ENCODE measurements at regions of chr4 and their contacts with region 1.

Region 1: DNA sequence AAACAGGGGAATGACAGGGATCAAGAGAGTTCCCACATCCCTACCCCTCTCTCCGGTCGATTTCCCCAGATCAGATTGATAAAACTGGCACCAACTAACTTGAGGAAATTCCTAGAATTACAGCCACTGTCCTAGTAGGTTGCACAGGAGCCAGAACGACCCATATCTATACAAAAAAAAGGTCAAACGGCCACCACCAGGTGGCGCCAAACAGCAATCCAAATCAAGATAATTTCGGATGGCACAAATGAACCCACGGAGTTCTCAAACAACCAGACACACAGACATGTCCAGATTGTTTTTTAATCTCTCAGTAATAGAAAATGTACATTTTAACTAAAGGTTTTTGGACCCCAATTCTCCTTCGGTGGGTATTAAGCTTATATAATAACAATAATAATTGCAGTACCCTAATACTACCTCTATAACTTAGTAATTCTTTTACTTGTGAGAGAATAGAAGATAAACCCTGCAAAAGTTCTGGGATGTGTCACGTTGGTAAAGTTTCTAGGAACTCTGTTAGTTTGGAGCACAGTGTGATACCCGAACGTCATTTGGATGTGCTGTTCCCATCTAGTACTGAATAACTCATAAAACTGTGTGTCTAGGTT is 212.6 kb downstream of the SPOCK3 start:
- DNase-seq: peak; percentile 76
- ATAC-seq: no peak
- H3K4me3 Mint-ChIP-seq: no peak overlapping the region
- H3K27ac Mint-ChIP-seq: no peak overlapping the region
- H3K4me1 Mint-ChIP-seq: no peaks in the 10 kb centered on the region
- H3K27me3 Mint-ChIP-seq: no peaks in the 10 kb centered on the region
- CTCF ChIP-seq: peak; percentile 78

Region 2: DNA sequence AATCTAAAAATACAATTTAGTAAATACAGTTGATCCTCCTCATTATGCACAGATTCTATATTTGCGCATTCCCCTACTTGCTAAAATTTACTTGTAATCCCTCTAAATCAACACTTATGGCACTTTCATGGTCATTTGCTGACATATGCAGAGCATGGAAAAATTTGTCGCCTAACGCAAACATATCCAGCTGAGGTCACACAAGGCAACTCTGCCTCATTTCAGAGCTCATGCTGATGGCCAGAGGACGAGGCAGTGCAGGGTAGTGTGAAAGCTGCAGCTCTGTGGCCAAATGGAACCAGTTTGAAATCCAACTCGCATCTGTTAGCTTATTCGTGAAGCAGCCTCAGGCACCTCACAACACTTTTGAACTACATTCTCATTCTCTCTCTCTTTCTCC is 1854.0 kb before region 1 on chr4:
- CTCF ChIA-PET with region 1: no interaction called
- POLR2A ChIA-PET with region 1: no interaction called
- intact Hi-C with region 1: no loop called
- DNase-seq: no peak
- ATAC-seq: no peak
- H3K4me3 Mint-ChIP-seq: no peak overlapping the region
- H3K27ac Mint-ChIP-seq: no peak overlapping the region
- H3K4me1 Mint-ChIP-seq: no peaks in the 10 kb centered on the region
- H3K27me3 Mint-ChIP-seq: no peaks in the 10 kb centered on the region
- CTCF ChIP-seq: no peak

Region 3: GRCh38 chr4:166924424-166924823 is 97.2 kb before region 1 on chr4:
- CTCF ChIA-PET with region 1: no interaction called
- POLR2A ChIA-PET with region 1: no interaction called
- intact Hi-C with region 1: no loop called
- DNase-seq: no peak
- ATAC-seq: no peak
- H3K4me3 Mint-ChIP-seq: no peak overlapping the region
- H3K27ac Mint-ChIP-seq: no peak overlapping the region
- H3K4me1 Mint-ChIP-seq: no peaks in the 10 kb centered on the region
- H3K27me3 Mint-ChIP-seq: no peaks in the 10 kb centered on the region
- CTCF ChIP-seq: no peak

Region 4: GRCh38 chr4:167290678-167291077 is 269.0 kb after region 1 on chr4:
- CTCF ChIA-PET with region 1: no interaction called
- POLR2A ChIA-PET with region 1: no interaction called
- intact Hi-C with region 1: loop called (anchors 5 kb)
- DNase-seq: no peak
- ATAC-seq: no peak
- H3K4me3 Mint-ChIP-seq: no peak overlapping the region
- H3K27ac Mint-ChIP-seq: no peak overlapping the region
- H3K4me1 Mint-ChIP-seq: no peaks in the 10 kb centered on the region
- H3K27me3 Mint-ChIP-seq: no peaks in the 10 kb centered on the region
- CTCF ChIP-seq: no peak

Region 5: GRCh38 chr4:167622481-167623246 is 601.0 kb after region 1 on chr4:
- CTCF ChIA-PET with region 1: no interaction called
- POLR2A ChIA-PET with region 1: no interaction called
- intact Hi-C with region 1: loop called (anchors 5 kb)
- DNase-seq: peak; percentile 52
- ATAC-seq: peak; percentile 49
- H3K4me3 Mint-ChIP-seq: no peak overlapping the region
- H3K27ac Mint-ChIP-seq: no peak overlapping the region
- H3K4me1 Mint-ChIP-seq: no peaks in the 10 kb centered on the region
- H3K27me3 Mint-ChIP-seq: no peaks in the 10 kb centered on the region
- CTCF ChIP-seq: peak; percentile 54

Region 6: DNA sequence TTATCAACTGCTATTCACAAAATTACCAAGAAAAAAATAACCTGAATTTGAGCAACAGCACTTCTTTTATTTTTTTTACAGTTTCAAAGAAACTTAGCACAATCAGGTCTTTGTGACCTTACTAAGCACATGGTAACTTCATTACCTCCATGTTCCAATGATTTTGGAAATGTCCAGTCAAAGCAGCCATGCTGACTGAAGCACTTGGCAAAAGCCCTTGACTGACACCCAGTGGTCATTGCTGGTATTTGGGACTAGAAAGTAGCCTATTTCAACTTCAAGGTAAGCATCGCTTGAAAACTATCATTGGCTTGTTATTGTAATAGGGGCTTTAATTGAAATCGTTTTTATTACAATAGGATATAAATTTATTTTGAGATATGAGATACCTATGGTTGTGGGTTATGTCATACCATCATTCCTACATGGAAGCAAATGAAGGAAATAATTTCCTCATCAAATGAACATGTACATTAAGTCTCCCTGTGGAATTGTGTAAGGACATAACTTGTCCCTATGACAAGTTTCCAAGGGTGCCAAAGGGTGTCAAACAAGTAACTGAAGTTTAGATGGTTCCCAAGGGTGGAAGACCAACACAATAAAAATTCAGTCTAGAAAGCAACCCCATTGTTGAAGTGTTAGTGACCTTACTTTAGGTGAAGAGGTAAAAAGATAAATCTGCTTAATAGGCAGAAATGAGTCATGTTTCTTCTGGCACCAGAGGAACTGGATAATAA is 1055.5 kb after region 1 on chr4:
- CTCF ChIA-PET with region 1: no interaction called
- POLR2A ChIA-PET with region 1: no interaction called
- intact Hi-C with region 1: loop called (anchors 5 kb)
- DNase-seq: peak; percentile 66
- ATAC-seq: peak; percentile 55
- H3K4me3 Mint-ChIP-seq: no peak overlapping the region
- H3K27ac Mint-ChIP-seq: no peak overlapping the region
- H3K4me1 Mint-ChIP-seq: no peaks in the 10 kb centered on the region
- H3K27me3 Mint-ChIP-seq: no peaks in the 10 kb centered on the region
- CTCF ChIP-seq: peak; percentile 77

Region 7: GRCh38 chr4:168153596-168154440 is 1132.2 kb after region 1 on chr4:
- CTCF ChIA-PET with region 1: no interaction called
- POLR2A ChIA-PET with region 1: no interaction called
- intact Hi-C with region 1: loop called (anchors 5 kb)
- DNase-seq: peak; percentile 80
- ATAC-seq: peak; percentile 77
- H3K4me3 Mint-ChIP-seq: no peak overlapping the region
- H3K27ac Mint-ChIP-seq: no peak overlapping the region
- H3K4me1 Mint-ChIP-seq: peaks cover 5% of the 10 kb centered on the region
- H3K27me3 Mint-ChIP-seq: no peaks in the 10 kb centered on the region
- CTCF ChIP-seq: peak; percentile 73